ENCODE measurements at regions of chr19 and their contacts with region 1.

Region 1: GRCh38 chr19:38315657-38316476 is at the start of gene YIF1B:
- DNase-seq: peak; percentile 97
- ATAC-seq: peak; percentile 96
- H3K4me3 Mint-ChIP-seq: peak within 1 kb of the TSS; percentile 95
- H3K27ac Mint-ChIP-seq: peak within 1 kb of the TSS; percentile 95
- H3K4me1 Mint-ChIP-seq: peaks cover 42% of the 10 kb centered on the region
- H3K27me3 Mint-ChIP-seq: no peaks in the 10 kb centered on the region
- CTCF ChIP-seq: no peak
- total RNA-seq, gene YIF1B: 75.6 to 79.0 TPM

Region 2: GRCh38 chr19:38263689-38264485 is 52.0 kb before region 1 on chr19:
- CTCF ChIA-PET with region 1: interaction called, 6 read pairs
- POLR2A ChIA-PET with region 1: interaction called, 13 read pairs
- intact Hi-C with region 1: loop called (anchors 10 kb)
- DNase-seq: peak; percentile 89
- ATAC-seq: peak; percentile 89
- H3K4me3 Mint-ChIP-seq: peak overlapping the region; percentile 78
- H3K27ac Mint-ChIP-seq: peak overlapping the region; percentile 97
- H3K4me1 Mint-ChIP-seq: peaks cover 43% of the 10 kb centered on the region
- H3K27me3 Mint-ChIP-seq: peaks cover 2% of the 10 kb centered on the region
- CTCF ChIP-seq: no peak

Region 3: GRCh38 chr19:38361633-38362075 is 45.8 kb after region 1 on chr19:
- CTCF ChIA-PET with region 1: no interaction called
- POLR2A ChIA-PET with region 1: no interaction called
- intact Hi-C with region 1: no loop called
- DNase-seq: peak; percentile 76
- ATAC-seq: peak; percentile 78
- H3K4me3 Mint-ChIP-seq: peak overlapping the region; percentile 78
- H3K27ac Mint-ChIP-seq: no peak overlapping the region
- H3K4me1 Mint-ChIP-seq: peaks cover 10% of the 10 kb centered on the region
- H3K27me3 Mint-ChIP-seq: peaks cover 25% of the 10 kb centered on the region
- CTCF ChIP-seq: peak; percentile 26